ENCODE measurements at regions of chr20 and their contacts with region 1.

Region 1: DNA sequence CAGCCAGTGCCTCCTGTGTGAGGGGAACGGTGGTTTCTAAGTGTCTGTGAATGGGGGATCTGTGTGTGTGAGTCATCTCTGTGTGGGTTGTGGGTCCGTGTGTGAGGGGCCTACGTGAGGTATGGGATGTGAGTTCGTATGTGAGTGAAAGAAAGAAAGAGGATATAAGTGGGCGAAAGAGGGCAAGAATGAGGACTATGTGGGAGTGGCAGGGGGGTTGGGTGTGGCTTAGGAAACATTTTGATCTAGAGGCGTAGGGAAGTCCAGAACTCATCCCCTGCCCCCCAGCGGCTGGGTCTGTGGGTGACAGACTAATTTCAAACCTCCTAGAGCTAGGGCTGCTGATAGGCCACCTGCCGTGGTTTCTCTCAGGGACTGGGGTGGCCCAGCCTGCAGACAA is 35.5 kb downstream of the DHX35 start:
- DNase-seq: peak; percentile 96
- ATAC-seq: peak; percentile 94
- H3K4me3 Mint-ChIP-seq: peak overlapping the region; percentile 44
- H3K27ac Mint-ChIP-seq: peak overlapping the region; percentile 77
- H3K4me1 Mint-ChIP-seq: peaks cover 35% of the 10 kb centered on the region
- H3K27me3 Mint-ChIP-seq: no peaks in the 10 kb centered on the region
- CTCF ChIP-seq: peak; percentile 49

Region 2: DNA sequence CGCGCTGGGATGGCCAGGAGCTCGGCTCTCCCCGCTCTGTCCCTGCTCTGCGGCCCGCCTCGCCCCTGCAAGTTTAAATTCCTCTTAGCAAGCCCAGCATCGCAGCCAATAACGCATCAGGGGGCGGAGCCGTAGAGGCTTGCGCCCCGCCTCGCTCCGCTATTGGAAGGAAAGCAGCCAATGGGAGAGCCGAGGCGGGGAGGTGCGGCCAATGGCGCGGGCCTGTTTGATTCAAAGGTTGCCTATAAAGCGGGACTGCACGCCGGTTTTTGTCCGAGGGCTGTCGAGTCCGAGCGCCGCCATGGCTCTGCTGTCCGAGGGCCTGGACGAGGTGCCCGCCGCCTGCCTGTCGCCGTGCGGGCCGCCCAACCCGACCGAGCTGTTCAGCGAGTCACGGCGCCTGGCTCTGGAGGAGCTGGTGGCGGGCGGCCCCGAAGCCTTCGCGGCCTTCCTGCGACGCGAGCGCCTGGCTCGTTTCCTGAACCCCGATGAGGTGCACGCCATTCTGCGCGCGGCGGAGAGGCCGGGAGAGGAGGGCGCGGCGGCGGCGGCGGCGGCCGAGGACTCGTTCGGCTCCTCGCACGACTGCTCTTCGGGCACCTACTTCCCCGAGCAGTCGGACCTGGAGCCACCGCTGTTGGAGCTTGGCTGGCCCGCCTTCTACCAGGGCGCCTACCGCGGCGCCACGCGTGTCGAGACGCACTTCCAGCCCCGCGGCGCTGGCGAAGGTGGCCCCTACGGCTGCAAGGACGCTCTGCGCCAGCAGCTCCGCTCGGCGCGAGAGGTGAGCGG is 71.3 kb before region 1 on chr20 and contains the start of gene FAM83D:
- CTCF ChIA-PET with region 1: interaction called, 22 read pairs
- POLR2A ChIA-PET with region 1: interaction called, 5 read pairs
- intact Hi-C with region 1: no loop called
- DNase-seq: peak; percentile 99
- ATAC-seq: peak; percentile 97
- H3K4me3 Mint-ChIP-seq: peak within 1 kb of the TSS; percentile 82
- H3K27ac Mint-ChIP-seq: peak within 1 kb of the TSS; percentile 52
- H3K4me1 Mint-ChIP-seq: peaks cover 22% of the 10 kb centered on the region
- H3K27me3 Mint-ChIP-seq: no peaks in the 10 kb centered on the region
- CTCF ChIP-seq: no peak
- total RNA-seq, gene FAM83D: 12.6 to 13.8 TPM

Region 3: DNA sequence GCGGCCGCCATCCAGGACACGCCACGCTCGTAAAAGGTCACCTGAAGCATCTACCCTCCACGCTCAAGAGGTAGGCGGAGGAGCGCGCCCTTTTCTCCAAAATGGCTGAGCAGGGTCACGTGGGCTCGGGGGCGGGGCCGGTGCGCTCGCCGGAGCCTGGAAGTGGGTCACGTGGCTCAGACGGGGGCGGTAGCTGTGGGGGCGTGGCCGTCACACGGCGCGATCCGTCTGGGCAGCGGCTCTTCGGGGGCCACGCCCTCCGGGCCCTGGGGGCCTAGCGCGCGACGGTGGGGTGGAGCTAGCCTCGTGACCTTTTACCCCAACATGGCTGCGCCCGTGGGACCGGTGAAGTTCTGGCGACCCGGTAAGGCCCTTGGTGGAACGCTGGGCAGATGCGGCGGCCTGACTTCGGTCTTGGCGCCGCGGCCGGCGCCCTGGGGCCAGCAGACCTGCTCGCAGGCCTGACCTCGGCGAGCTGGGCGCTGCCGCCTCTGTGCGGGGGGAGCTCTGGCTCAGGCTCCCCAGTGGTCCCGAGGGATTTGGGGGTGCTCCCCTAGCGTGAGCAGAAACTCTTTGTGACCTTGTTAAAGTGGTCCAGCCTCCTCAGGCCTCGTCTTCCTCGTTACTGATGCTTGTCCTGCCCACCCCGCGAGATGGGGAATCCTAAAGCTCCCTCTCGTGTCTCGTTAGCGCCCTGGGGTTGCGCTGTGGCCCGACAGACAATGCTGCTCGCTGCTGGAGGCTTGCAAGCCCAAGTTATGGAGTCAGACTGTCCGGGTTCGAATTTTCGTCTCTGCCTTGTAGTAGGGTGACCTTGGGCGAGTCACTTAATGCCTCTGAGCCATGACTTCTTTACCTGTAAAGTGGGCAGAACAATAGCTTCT is 35.3 kb before region 1 on chr20 and contains the start of gene DHX35:
- CTCF ChIA-PET with region 1: interaction called, 22 read pairs
- POLR2A ChIA-PET with region 1: interaction called, 7 read pairs
- intact Hi-C with region 1: no loop called
- DNase-seq: peak; percentile 99
- ATAC-seq: peak; percentile 99
- H3K4me3 Mint-ChIP-seq: peak within 1 kb of the TSS; percentile 87
- H3K27ac Mint-ChIP-seq: peak within 1 kb of the TSS; percentile 93
- H3K4me1 Mint-ChIP-seq: peaks cover 20% of the 10 kb centered on the region
- H3K27me3 Mint-ChIP-seq: no peaks in the 10 kb centered on the region
- CTCF ChIP-seq: peak; percentile 18
- total RNA-seq, gene DHX35: 12.2 to 12.6 TPM

Region 4: DNA sequence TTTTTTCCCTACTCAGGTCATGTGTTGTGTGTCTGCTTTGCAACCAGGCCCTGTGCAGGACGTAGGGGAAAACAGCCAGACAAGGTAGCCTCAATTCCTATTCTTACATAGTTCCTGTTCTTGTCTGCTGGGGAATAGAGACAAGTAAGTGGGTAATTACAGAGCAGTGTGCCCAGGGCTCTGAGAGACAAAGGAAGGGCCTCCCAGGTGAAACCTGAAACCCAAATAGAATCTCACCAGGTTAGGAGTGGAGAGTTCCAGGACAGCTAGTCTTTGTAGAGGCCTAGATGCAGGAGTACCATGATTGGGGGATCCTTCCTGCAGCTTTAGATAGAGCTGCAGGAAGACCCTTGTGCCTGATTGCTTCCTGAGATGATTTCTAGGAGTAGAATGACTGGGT is 12.9 kb after region 1 on chr20:
- CTCF ChIA-PET with region 1: interaction called, 13 read pairs
- POLR2A ChIA-PET with region 1: interaction called, 4 read pairs
- intact Hi-C with region 1: no loop called
- DNase-seq: no peak
- ATAC-seq: no peak
- H3K4me3 Mint-ChIP-seq: no peak overlapping the region
- H3K27ac Mint-ChIP-seq: no peak overlapping the region
- H3K4me1 Mint-ChIP-seq: peaks cover 11% of the 10 kb centered on the region
- H3K27me3 Mint-ChIP-seq: no peaks in the 10 kb centered on the region
- CTCF ChIP-seq: no peak

Region 5: GRCh38 chr20:39019805-39020325 is 22.2 kb after region 1 on chr20:
- CTCF ChIA-PET with region 1: interaction called, 7 read pairs
- POLR2A ChIA-PET with region 1: interaction called, 4 read pairs
- intact Hi-C with region 1: loop called (anchors 1 kb)
- DNase-seq: peak; percentile 79
- ATAC-seq: peak; percentile 90
- H3K4me3 Mint-ChIP-seq: peak overlapping the region; percentile 11
- H3K27ac Mint-ChIP-seq: peak overlapping the region; percentile 66
- H3K4me1 Mint-ChIP-seq: peaks cover 60% of the 10 kb centered on the region
- H3K27me3 Mint-ChIP-seq: no peaks in the 10 kb centered on the region
- CTCF ChIP-seq: no peak

Measured in activated CD8-positive, alpha-beta T cell treated with anti-CD3 and anti-CD28 coated beads for 36 hours (primary cell).